Activated naive CD4-positive, alpha-beta T cell treated with anti-CD3 and anti-CD28 coated beads for 36 hours (primary cell): ENCODE measurements at regions of chr2 and their contacts with region 1.

Region 1: DNA sequence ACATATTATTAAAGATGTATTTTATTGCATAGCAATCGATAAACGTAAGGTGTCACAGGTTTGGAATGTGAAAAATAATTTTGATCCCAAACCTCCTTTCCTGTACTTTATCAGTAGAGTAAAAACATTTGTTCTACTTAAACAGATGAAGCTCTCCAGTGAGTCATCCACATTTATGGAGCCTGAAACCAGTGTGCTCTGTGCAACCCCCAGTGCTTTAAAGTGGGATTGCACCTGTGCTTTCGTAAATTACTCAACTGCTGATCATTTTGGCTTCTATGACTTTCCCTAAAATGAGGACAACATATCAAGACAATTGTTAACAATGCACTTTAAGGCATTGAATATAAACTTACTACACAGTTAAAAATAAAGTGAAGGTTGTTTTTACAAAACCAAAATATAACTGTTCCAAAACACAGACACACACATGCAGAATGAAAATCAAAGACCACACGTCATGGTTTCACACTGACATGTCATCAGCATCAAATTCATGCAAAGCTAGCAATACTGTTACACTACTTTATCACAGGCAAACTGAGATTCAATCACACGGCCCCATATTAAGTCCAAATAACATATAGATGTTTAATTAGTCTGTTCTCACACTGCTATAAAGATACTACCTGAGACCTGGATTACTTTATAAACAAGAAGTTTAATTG is 9.7 kb downstream of the TMEM18 start:
- DNase-seq: peak; percentile 60
- H3K4me3 Mint-ChIP-seq: no peak overlapping the region
- H3K27ac Mint-ChIP-seq: peak overlapping the region; percentile 44
- H3K4me1 Mint-ChIP-seq: peaks cover 35% of the 10 kb centered on the region
- H3K27me3 Mint-ChIP-seq: no peaks in the 10 kb centered on the region

Region 2: DNA sequence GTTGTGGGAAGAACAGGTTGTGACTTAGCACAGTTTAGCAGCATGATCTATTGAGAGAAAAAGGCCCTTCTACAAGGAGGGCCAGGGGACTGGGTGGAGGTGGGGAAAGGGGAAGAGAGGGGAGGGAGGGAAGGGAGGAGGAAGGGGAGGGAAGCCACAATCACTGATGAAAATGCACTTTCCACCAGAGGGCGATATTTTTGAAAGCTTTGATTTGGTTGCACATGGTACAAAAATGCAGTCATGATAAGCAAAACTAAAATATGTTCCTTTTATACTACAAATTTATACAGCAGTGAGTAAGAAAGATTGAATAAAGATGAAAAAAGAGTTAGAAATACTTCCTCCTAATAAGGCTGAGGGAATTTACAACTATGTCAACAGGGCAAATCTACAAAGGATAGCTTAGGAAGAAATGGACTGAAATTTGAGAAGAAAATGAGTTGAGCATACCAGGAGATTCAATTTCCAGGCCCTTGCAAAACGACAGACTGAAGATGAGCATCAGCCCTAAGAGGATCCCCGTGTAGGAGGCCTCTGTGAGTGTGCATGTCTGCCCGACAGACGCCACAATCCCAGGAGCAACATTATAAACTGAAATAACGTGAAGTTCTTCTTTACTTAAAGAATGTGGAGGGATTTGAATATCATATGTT is 420.8 kb before region 1 on chr2:
- CTCF ChIA-PET with region 1: no interaction called
- intact Hi-C with region 1: loop called (anchors 1 kb)
- DNase-seq: peak; percentile 51
- H3K4me3 Mint-ChIP-seq: no peak overlapping the region
- H3K27ac Mint-ChIP-seq: no peak overlapping the region
- H3K4me1 Mint-ChIP-seq: peaks cover 5% of the 10 kb centered on the region
- H3K27me3 Mint-ChIP-seq: no peaks in the 10 kb centered on the region

Region 3: DNA sequence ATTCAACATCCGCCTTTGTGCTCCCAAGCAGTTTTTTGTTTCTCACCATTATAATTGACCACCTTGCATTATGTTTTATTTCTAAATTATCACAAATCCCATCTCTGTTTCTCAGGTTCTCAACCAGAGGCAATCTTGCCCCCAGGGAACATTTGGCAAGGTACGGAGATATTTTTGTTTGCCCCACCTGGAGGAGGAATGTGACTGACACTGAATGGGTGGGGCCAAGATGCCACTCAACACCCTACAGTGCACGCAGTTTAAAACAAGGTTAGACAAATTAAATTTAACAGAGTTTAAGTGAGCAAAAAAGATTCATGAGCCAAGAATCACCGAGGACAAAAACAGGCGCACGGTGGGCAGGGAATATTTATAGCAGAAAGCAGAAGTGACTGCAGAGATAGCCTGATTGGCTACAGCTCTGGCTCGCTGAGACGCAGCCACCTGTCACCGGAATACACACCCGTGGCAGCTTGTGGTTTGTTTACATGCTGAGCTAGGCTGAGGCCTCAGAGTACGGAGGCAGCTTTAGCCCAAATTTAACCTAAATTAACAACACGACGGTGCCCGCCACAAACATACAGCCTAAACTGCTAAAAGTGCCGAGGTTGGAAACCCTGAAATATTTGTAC is 229.6 kb before region 1 on chr2:
- CTCF ChIA-PET with region 1: interaction called, 3 read pairs
- intact Hi-C with region 1: loop called (anchors 10 kb)
- DNase-seq: peak; percentile 64
- H3K4me3 Mint-ChIP-seq: peak overlapping the region; percentile 65
- H3K27ac Mint-ChIP-seq: no peak overlapping the region
- H3K4me1 Mint-ChIP-seq: peaks cover 9% of the 10 kb centered on the region
- H3K27me3 Mint-ChIP-seq: no peaks in the 10 kb centered on the region

Region 4: GRCh38 chr2:529425-529824 is 138.0 kb before region 1 on chr2:
- CTCF ChIA-PET with region 1: interaction called, 4 read pairs
- intact Hi-C with region 1: loop called (anchors 1 kb)
- DNase-seq: no peak
- H3K4me3 Mint-ChIP-seq: no peak overlapping the region
- H3K27ac Mint-ChIP-seq: no peak overlapping the region
- H3K4me1 Mint-ChIP-seq: no peaks in the 10 kb centered on the region
- H3K27me3 Mint-ChIP-seq: peaks cover 12% of the 10 kb centered on the region

Region 5: GRCh38 chr2:741195-741496 is 73.7 kb after region 1 on chr2:
- CTCF ChIA-PET with region 1: no interaction called
- intact Hi-C with region 1: no loop called
- DNase-seq: no peak
- H3K4me3 Mint-ChIP-seq: no peak overlapping the region
- H3K27ac Mint-ChIP-seq: no peak overlapping the region
- H3K4me1 Mint-ChIP-seq: peaks cover 4% of the 10 kb centered on the region
- H3K27me3 Mint-ChIP-seq: peaks cover 47% of the 10 kb centered on the region